Gastrocnemius medialis (tissue), 4 donors: ENCODE measurements at regions of chr2 and their contacts with region 1.

Region 1: DNA sequence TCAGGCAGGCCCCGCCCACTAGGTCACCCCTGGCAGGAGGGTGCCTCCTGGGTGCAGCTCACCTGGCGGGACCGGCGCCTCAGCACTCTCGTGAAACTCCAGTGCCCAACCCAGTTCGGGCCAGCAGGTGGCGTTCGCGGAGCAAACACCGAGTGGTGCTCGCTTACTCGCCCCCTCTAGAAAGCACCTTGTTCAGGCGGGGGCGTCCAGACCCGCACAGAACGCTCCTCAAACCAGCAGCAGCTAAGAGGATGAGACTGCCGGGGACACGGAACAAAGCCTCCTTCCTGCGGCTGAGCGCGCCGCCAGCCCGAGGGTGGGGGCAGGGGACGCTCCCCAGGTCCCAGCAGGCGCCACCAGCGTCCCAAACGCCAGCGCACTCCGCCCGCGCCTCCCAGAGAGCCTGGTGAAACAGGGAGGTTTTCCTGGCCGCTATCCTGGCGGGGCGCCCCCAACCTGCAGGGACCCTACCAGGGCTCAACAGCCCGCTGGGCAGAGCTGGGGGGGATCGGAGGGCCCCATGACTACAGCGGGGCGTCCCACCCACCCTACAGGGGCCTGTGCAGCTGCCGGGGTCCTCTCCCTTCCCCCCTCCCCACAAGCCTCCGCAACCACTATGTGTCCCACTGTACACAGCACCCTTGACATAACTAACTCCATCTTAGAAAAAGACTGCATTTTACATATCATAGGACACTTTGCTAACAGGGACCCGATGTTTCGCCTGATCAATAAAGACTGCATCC is 44.7 kb downstream of the MRPS5 start:
- DNase-seq: peak; percentile 30 to 49
- ATAC-seq: peak; percentile 71 to 79
- H3K4me3 ChIP-seq: peak overlapping the region; percentile 49 to 56 (median 54)
- H3K27ac ChIP-seq: peak overlapping the region in 3 of 4 donors; percentile 23 to 39 (median 34)
- H3K4me1 ChIP-seq: peaks cover 0 to 7% of the 10 kb centered on the region in 2 donors
- H3K27me3 ChIP-seq: peaks cover 11 to 26% (median 13%) of the 10 kb centered on the region in 3 donors
- CTCF ChIP-seq: peak; percentile 52 to 87 (median 75)
- POLR2A ChIP-seq: no peak

Region 2: DNA sequence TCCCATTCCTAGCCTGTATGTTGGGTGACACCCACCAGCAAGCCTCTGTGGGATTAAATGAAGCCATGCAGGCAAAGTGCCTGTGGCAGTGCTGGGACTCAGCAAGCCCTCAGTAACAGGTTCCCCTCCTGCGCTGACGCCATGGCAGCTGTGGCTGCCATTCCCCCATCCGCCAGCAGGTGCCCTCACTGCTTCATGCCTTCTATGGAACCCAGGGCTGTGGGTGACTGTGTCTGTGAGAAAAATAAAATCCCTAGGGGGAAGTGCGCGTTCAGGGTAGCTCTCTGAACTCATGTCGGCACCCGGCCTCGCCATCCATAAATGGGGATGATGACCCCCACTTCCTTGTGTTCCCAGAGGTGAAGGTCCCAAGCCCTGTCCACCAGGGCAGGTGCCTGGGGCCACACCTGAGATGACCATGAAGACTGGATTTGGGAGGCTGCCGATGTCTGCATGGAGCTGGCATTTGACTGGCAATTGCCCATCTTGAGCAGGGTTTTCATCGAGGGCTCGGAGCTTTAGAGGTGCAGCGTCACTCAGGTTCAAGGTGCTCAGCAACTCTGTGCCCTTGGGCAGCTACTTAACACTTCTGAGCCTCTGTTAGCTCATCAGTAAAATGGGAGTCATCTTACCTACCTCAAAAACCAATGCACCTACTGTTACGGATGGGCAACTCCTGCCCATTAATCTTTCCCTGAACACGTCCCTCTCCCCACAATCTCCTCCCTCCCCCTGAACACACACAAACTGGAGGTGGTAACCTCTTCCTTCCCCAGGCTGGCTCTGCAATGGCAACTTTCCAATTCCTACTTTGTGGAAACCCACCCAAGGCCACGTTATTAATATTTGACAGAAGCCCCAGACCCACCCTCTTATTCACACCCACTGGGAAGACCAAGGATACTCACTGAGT is 54.4 kb before region 1 on chr2:
- in situ Hi-C with region 1: no loop called
- intact Hi-C with region 1: loop called (anchors 10 kb)
- DNase-seq: peak in 1 of 2 donors; percentile 27
- ATAC-seq: peak; percentile 36 to 41
- H3K4me3 ChIP-seq: no peak overlapping the region
- H3K27ac ChIP-seq: no peak overlapping the region
- H3K4me1 ChIP-seq: peaks cover 0 to 9% of the 10 kb centered on the region in 2 donors
- H3K27me3 ChIP-seq: peaks cover 28 to 48% (median 45%) of the 10 kb centered on the region in 3 donors
- CTCF ChIP-seq: peak; percentile 57 to 72 (median 63)
- POLR2A ChIP-seq: no peak

Region 3: GRCh38 chr2:95115418-95115817 is 38.5 kb after region 1 on chr2:
- in situ Hi-C with region 1: no loop called
- intact Hi-C with region 1: loop called (anchors 1 kb)
- DNase-seq: peak; percentile 31 to 45
- ATAC-seq: peak; percentile 73 to 90
- H3K4me3 ChIP-seq: no peak overlapping the region
- H3K27ac ChIP-seq: no peak overlapping the region
- H3K4me1 ChIP-seq: peaks cover 21 to 22% of the 10 kb centered on the region in 2 donors
- H3K27me3 ChIP-seq: no peaks in the 10 kb centered on the region
- CTCF ChIP-seq: peak; percentile 31 to 73 (median 54)
- POLR2A ChIP-seq: no peak

Region 4: DNA sequence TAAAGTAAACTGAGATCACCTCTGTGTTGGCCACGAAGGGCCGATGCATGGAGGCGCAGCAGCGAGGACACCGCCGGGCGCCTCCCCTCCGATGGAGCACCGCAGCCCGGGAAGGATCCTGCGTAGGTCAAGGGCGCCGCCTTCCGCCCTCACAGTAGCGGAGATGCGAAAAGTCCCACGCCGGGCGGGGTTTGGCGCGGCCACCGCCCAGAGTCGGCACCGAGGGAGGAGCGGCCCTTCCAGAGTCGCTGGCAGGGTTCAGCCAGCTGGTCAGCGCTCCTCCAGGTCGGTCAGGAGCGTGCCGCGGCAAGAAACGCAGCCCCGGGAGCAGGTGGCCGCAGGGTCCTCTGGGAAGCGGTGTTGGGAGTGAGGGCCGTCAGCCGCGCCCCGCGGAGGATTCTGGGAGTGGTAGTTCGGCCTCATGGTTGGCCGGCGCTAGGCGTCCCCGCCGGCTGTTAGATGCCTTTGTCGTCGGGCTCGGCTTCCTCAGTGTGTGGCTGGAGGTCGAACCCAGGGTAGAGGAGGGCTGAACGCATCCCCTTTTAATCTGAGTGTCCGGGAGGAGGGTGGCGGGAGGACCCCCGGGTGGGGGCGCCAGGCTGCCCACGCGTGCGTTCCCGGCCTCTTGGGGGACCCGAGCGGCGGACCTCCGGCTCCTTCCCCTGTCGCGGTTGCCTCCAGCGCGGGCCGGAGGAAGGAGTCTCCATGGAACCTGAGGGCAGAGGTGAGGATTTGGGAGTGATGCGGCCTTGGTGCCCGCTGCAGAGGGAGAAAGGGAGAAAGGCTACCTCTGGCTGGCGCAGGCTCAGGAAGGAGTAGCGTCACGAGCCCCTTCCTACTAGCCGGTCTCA is 130.4 kb after region 1 on chr2 and contains the start of gene ZNF892:
- in situ Hi-C with region 1: no loop called
- intact Hi-C with region 1: loop called (anchors 1 kb)
- DNase-seq: peak; percentile 88 to 90
- ATAC-seq: peak; percentile 96 to 97
- H3K4me3 ChIP-seq: peak within 1 kb of the TSS; percentile 62 to 79 (median 70)
- H3K27ac ChIP-seq: peak within 1 kb of the TSS; percentile 81 to 88 (median 84)
- H3K4me1 ChIP-seq: peaks cover 14 to 16% of the 10 kb centered on the region in 2 donors
- H3K27me3 ChIP-seq: no peaks in the 10 kb centered on the region
- CTCF ChIP-seq: peak; percentile 10 to 56 (median 38)
- POLR2A ChIP-seq: peak; percentile 35 to 45
- total RNA-seq, gene ZNF892: 1.5 to 4.5 (median 2.1) TPM